PC-3 (cell line): ENCODE measurements at regions of chr10 and their contacts with region 1.

Region 1: GRCh38 chr10:73798927-73799563 is 12.4 kb downstream of the NDST2 start:
- DNase-seq: no peak
- ATAC-seq: peak; percentile 2
- H3K4me3 ChIP-seq: no peak overlapping the region
- H3K27ac ChIP-seq: no peak overlapping the region
- H3K4me1 ChIP-seq: no peaks in the 10 kb centered on the region
- H3K27me3 ChIP-seq: no peaks in the 10 kb centered on the region
- CTCF ChIP-seq: no peak

Region 2: DNA sequence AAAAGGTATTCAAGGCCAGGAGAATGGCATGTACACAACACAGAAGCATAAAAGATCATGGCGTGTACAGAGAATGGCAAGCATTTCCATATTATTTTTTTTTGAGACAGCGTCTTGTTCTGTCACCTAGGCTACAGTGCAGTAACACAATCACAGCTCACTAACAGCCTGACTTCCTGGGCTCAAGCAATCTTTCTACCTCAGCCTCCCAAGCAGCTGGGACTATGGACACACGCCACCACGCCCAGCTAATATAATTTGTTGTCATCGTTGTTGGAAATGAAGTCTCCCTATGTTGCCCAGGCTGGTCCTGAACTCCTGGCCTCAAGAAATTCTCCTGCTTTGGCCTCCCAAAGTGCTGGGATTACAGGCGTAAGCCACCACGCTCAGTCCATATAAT is 412.5 kb before region 1 on chr10:
- CTCF ChIA-PET with region 1: no interaction called
- POLR2A ChIA-PET with region 1: no interaction called
- intact Hi-C with region 1: no loop called
- DNase-seq: no peak
- ATAC-seq: no peak; the same call in 1 of the 2 replicates
- H3K4me3 ChIP-seq: no peak overlapping the region
- H3K27ac ChIP-seq: no peak overlapping the region
- H3K4me1 ChIP-seq: no peaks in the 10 kb centered on the region
- H3K27me3 ChIP-seq: no peaks in the 10 kb centered on the region
- CTCF ChIP-seq: no peak

Region 3: DNA sequence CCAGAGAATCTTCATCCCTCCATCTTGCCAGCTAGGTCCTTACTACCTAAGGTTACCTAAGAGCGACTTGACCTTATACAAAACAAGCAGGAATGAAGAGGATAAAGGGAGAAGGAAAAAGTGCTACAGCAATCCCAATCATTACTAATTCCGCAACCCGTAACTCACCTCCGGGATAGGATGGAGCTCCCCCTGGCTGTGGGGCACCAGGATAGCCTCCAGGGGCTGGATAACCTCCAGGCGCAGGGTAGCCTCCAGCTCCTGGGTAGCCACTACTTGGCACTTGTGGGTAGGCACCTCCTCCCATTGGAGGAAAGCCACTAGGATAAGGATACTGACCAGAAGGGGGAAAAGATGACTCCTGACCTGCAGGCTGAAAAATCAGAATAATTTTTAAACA is 401.0 kb before region 1 on chr10:
- CTCF ChIA-PET with region 1: interaction called, 15 read pairs
- POLR2A ChIA-PET with region 1: no interaction called
- intact Hi-C with region 1: no loop called
- DNase-seq: peak; percentile 68
- ATAC-seq: peak; percentile 57
- H3K4me3 ChIP-seq: no peak overlapping the region
- H3K27ac ChIP-seq: no peak overlapping the region
- H3K4me1 ChIP-seq: no peaks in the 10 kb centered on the region
- H3K27me3 ChIP-seq: no peaks in the 10 kb centered on the region
- CTCF ChIP-seq: peak; percentile 99

Region 4: DNA sequence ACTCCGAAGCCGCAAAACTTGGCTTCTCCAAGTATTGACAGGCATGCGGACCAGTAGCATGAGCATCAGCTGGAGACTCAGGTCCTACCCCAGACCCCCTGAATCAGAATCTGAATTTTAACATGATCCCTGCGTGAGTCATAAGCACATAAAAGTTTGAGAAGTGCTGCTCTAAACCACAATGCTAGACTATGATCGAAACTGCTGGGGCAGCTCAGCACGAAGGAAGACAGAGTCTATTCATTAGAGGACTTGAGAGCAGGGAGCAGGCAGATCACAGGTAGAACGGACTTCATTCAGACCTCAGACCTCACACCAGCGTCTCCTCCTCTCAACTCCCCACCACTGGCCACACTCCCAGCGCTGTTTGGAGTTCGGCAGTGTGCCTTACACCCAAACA is 58.4 kb after region 1 on chr10:
- CTCF ChIA-PET with region 1: no interaction called
- POLR2A ChIA-PET with region 1: no interaction called
- intact Hi-C with region 1: no loop called
- DNase-seq: no peak
- ATAC-seq: no peak
- H3K4me3 ChIP-seq: no peak overlapping the region
- H3K27ac ChIP-seq: no peak overlapping the region
- H3K4me1 ChIP-seq: no peaks in the 10 kb centered on the region
- H3K27me3 ChIP-seq: no peaks in the 10 kb centered on the region
- CTCF ChIP-seq: no peak

Region 5: GRCh38 chr10:74507951-74508350 is 708.9 kb after region 1 on chr10:
- CTCF ChIA-PET with region 1: no interaction called
- POLR2A ChIA-PET with region 1: no interaction called
- intact Hi-C with region 1: no loop called
- DNase-seq: no peak
- ATAC-seq: no peak
- H3K4me3 ChIP-seq: no peak overlapping the region
- H3K27ac ChIP-seq: no peak overlapping the region
- H3K4me1 ChIP-seq: peaks cover 12% of the 10 kb centered on the region
- H3K27me3 ChIP-seq: no peaks in the 10 kb centered on the region
- CTCF ChIP-seq: no peak